GM12878 (cell line): ENCODE measurements at regions of chr1 and their contacts with region 1.

Region 1: GRCh38 chr1:115068826-115069572 is 20.3 kb downstream of the TSPAN2 start:
- DNase-seq: no peak
- ATAC-seq: no peak
- H3K4me3 ChIP-seq: no peak overlapping the region
- H3K27ac ChIP-seq: no peak overlapping the region
- H3K4me1 ChIP-seq: no peaks in the 10 kb centered on the region
- H3K27me3 ChIP-seq: no peaks in the 10 kb centered on the region; a peak in 1 of 4 replicates
- CTCF ChIP-seq: no peak
- EP300 ChIP-seq: no peak
- POLR2A ChIP-seq: no peak
- RAD21 ChIP-seq: no peak

Region 2: DNA sequence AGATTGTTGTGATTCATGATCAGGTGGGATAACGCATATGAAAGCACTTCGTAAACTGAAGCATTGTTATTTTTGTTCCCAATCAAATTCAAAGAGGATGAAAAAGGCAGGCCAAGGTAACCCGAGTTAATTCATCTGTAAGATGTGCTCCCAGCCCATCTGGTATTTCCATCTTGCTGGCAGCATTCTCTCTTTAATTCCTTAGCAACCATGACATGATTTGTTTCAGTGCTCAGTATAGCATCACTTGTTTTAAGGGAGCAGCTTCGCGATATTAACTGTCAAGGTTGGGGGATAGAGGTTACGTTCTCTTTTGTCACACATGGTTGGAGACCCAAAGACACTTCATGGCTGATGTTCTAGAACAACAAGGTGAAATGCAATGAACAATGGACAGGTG is 13.9 kb after region 1 on chr1:
- CTCF ChIA-PET with region 1: interaction called, 6 read pairs
- POLR2A ChIA-PET with region 1: interaction called, 12 read pairs
- RAD21 ChIA-PET with region 1: interaction called, 8 read pairs
- SMC1A ChIA-PET with region 1: interaction called, 21 read pairs
- in situ Hi-C with region 1: no loop called
- intact Hi-C with region 1: no loop called
- DNase-seq: no peak
- ATAC-seq: no peak
- H3K4me3 ChIP-seq: no peak overlapping the region
- H3K27ac ChIP-seq: no peak overlapping the region
- H3K4me1 ChIP-seq: no peaks in the 10 kb centered on the region
- H3K27me3 ChIP-seq: no peaks in the 10 kb centered on the region; a peak in 1 of 4 replicates
- CTCF ChIP-seq: no peak
- EP300 ChIP-seq: no peak
- POLR2A ChIP-seq: no peak
- RAD21 ChIP-seq: no peak

Region 3: GRCh38 chr1:115089420-115090185 is 20.6 kb after region 1 on chr1 and contains the start of gene TSPAN2:
- CTCF ChIA-PET with region 1: interaction called, 4 read pairs
- POLR2A ChIA-PET with region 1: interaction called, 7 read pairs
- RAD21 ChIA-PET with region 1: interaction called, 9 read pairs
- SMC1A ChIA-PET with region 1: interaction called, 13 read pairs
- in situ Hi-C with region 1: no loop called
- intact Hi-C with region 1: no loop called
- DNase-seq: no peak
- ATAC-seq: peak; percentile 79
- H3K4me3 ChIP-seq: no peak within 1 kb of the TSS
- H3K27ac ChIP-seq: no peak within 1 kb of the TSS
- H3K4me1 ChIP-seq: no peaks in the 10 kb centered on the region
- H3K27me3 ChIP-seq: peaks cover 5 to 13% of the 10 kb centered on the region in 2 experiments
- CTCF ChIP-seq: no peak; a peak in 1 of 6 replicates
- EP300 ChIP-seq: no peak
- POLR2A ChIP-seq: no peak
- RAD21 ChIP-seq: no peak
- polyA plus RNA-seq, gene TSPAN2: not detected

Region 4: GRCh38 chr1:115098979-115099692 is 30.1 kb after region 1 on chr1:
- CTCF ChIA-PET with region 1: interaction called, 6 read pairs
- POLR2A ChIA-PET with region 1: interaction called, 9 read pairs
- RAD21 ChIA-PET with region 1: interaction called, 17 read pairs
- SMC1A ChIA-PET with region 1: interaction called, 42 read pairs
- in situ Hi-C with region 1: no loop called
- intact Hi-C with region 1: no loop called
- DNase-seq: peak; percentile 37
- ATAC-seq: peak; percentile 93
- H3K4me3 ChIP-seq: peak overlapping the region; percentile 62; the same call in 1 of the 2 replicates
- H3K27ac ChIP-seq: no peak overlapping the region
- H3K4me1 ChIP-seq: peaks cover 7% of the 10 kb centered on the region
- H3K27me3 ChIP-seq: no peaks in the 10 kb centered on the region
- CTCF ChIP-seq: no peak
- EP300 ChIP-seq: peak in 1 of 2 experiments; percentile 32; a peak in 2 of 4 replicates
- POLR2A ChIP-seq: no peak
- RAD21 ChIP-seq: no peak

Region 5: DNA sequence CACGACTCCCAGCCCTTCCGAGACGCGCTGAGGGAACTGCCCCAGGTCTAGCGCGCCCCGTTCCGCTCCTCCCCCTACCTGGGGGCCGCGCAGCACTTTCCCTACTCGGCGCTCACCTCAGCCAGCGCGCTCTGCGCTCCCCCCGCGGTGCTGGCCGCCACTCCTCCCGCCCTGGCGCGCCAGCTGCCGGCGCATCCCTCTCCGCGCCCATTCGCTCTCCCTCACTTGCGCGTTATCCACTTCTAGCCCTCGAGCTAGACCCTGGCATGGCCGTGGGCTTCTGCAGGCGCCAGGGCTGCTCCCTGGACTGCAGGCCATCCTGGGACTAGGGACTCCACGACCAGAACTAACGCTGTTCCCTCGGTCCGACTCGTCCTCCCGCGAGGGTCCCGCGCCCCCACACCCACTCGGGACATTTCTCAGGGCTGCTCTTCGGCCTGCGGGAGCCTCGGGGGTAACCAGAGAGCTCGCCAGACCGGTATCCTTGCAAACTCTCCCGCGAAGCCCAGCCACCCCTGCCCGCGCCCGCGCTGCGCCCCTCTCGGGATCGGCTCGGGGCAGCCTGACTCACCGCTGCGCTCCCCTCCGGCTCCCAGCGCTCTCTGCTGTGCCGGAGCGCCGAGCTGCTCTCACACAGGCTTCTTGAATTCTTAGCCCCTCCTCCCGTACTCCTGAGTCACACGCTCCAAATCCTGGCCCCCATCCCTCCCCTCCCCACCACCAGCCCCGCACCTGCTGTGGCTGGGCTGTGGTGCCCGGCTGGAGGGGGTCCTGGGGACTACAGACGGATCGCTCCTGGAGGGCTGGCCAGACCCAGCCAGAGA is 268.8 kb after region 1 on chr1 and contains the start of gene NGF:
- CTCF ChIA-PET with region 1: no interaction called
- POLR2A ChIA-PET with region 1: no interaction called
- RAD21 ChIA-PET with region 1: no interaction called
- SMC1A ChIA-PET with region 1: no interaction called
- in situ Hi-C with region 1: no loop called
- intact Hi-C with region 1: no loop called
- DNase-seq: no peak
- ATAC-seq: no peak
- H3K4me3 ChIP-seq: no peak within 1 kb of the TSS
- H3K27ac ChIP-seq: no peak within 1 kb of the TSS
- H3K4me1 ChIP-seq: no peaks in the 10 kb centered on the region
- H3K27me3 ChIP-seq: peaks cover 0 to 4% of the 10 kb centered on the region in 2 experiments
- CTCF ChIP-seq: no peak
- EP300 ChIP-seq: no peak
- POLR2A ChIP-seq: no peak
- RAD21 ChIP-seq: no peak
- polyA plus RNA-seq, gene NGF: not detected